ENCODE measurements at regions of chr2 and their contacts with region 1.

Region 1: DNA sequence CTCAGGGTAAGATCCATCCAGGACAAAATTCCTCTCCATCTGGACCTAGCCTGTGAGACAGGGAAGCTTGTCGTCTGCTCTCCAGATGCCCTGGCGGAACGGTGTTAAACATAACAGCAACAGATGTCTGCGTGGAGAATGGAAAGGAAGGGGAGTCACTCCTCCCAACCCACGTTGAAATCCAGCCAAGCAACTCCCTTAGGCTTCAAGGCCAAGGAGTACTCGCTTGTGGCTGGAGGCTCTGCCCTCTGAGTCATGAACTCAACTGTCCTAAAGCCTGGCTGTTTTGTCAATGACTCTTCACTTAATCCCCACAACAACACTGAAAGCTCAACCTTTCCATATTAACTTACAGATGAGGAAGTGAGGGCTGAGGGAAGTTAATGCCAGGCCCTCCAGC is 42.2 kb downstream of the TPO start:
- DNase-seq: no peak
- H3K4me3 ChIP-seq: no peak overlapping the region
- H3K27ac ChIP-seq: no peak overlapping the region
- H3K4me1 ChIP-seq: no peaks in the 10 kb centered on the region
- CTCF ChIP-seq: no peak

Region 2: GRCh38 chr2:1910592-1911246 is 455.3 kb after region 1 on chr2:
- CTCF ChIA-PET with region 1: no interaction called
- POLR2A ChIA-PET with region 1: no interaction called
- intact Hi-C with region 1: loop called (anchors 10 kb)
- DNase-seq: peak; percentile 1
- H3K4me3 ChIP-seq: no peak overlapping the region
- H3K27ac ChIP-seq: no peak overlapping the region
- H3K4me1 ChIP-seq: no peaks in the 10 kb centered on the region
- CTCF ChIP-seq: peak; percentile 40; the same call in 1 of the 2 replicates

Measured in OCI-LY7 (cell line).